ENCODE measurements at regions of chr10 and their contacts with region 1.

Region 1: GRCh38 chr10:28668363-28669226 is 8.7 kb upstream of the BAMBI start:
- DNase-seq: peak in 1 of 2 donors; percentile 88
- H3K4me3 ChIP-seq: no peak overlapping the region
- CTCF ChIP-seq: no peak
- POLR2A ChIP-seq: no peak

Region 2: DNA sequence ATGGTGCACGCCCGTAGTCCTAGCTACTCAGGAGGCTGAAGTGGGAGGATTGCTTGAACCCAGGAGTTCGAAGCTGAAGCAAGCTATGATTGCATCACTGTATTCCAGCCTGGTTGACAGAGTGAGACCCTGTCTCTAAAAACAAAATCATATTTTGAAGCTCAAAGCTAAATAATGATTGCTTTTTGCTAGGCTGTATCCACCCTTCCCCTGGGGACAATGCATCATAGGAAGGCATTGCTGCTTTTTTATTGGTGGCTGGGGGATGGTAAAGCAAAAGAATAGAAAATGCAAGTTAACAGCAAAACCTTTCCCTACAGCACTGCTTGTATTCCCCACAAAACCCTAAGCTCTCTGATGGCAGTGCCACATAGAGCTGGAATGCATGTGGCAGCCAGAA is 243.2 kb before region 1 on chr10:
- intact Hi-C with region 1: no loop called
- DNase-seq: no peak
- H3K4me3 ChIP-seq: no peak overlapping the region
- CTCF ChIP-seq: no peak
- POLR2A ChIP-seq: no peak

Region 3: DNA sequence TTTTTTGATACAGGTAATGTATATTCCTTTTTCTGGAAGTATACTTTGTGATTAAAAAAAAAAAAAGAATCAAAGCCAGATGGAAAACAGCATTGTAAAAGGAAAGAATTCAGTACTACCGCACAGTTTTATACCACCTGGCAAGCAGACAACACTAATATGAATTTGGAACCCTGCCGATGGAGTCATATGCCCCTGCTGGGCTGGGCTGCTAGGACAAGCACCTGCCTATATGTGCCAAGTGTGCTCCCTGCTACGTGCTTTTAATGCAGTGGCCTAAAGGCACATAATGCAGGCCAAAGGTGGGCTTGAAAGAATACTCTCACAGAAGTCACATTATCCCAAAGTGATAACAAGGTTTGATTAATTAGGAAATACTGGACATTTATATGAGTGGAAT is 165.5 kb before region 1 on chr10:
- intact Hi-C with region 1: no loop called
- DNase-seq: no peak
- H3K4me3 ChIP-seq: no peak overlapping the region
- CTCF ChIP-seq: no peak
- POLR2A ChIP-seq: no peak

Region 4: DNA sequence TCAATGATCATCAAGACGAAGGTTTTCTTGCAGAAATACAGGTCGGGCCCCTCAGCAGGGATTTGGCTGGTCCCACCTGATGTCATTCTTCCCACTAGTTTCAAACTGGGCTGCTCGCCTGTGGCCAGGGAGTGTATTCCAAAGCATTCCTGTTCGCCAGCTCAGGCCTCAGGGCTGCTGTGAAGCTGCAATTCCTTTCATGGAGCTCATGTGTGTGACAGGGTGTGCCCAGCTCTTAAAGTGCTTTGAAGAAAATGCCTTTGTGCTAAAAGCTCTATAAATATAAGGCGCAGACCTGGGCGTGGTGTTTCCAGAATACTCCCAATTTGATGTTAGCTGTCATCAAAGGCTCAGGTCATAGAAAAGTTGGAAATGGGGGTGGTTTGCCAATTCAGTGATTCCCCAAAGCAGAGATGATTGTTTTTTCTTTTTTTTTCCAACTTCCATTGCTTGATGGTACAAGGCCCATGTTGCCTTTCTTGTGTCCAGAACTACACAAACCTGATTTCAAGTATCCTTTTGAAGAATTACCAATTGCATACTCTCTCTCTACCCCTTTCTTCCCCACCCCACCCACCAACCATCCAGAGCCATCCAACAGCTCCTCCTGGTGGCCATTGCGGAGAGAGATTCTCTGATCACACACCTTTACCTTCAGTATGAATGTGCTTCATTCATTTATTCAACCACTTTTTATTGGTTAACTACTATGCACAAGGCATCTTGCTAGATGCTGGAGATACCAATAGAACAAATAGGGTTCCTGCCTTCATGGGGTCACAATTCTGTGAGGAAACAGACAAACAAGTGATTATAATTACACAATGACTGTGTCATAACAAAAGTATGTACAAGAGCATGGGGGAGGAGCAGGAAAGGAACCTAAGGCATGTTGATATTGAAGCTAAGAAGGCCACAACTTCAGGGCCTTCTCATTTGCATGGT is 323.0 kb after region 1 on chr10:
- intact Hi-C with region 1: loop called (anchors 5 kb)
- DNase-seq: peak in 1 of 2 donors; percentile 18
- H3K4me3 ChIP-seq: no peak overlapping the region
- CTCF ChIP-seq: no peak
- POLR2A ChIP-seq: no peak

Region 5: GRCh38 chr10:29189256-29189655 is 520.7 kb after region 1 on chr10:
- intact Hi-C with region 1: no loop called
- DNase-seq: peak in 1 of 2 donors; percentile 13
- H3K4me3 ChIP-seq: no peak overlapping the region
- CTCF ChIP-seq: no peak
- POLR2A ChIP-seq: no peak

Region 6: DNA sequence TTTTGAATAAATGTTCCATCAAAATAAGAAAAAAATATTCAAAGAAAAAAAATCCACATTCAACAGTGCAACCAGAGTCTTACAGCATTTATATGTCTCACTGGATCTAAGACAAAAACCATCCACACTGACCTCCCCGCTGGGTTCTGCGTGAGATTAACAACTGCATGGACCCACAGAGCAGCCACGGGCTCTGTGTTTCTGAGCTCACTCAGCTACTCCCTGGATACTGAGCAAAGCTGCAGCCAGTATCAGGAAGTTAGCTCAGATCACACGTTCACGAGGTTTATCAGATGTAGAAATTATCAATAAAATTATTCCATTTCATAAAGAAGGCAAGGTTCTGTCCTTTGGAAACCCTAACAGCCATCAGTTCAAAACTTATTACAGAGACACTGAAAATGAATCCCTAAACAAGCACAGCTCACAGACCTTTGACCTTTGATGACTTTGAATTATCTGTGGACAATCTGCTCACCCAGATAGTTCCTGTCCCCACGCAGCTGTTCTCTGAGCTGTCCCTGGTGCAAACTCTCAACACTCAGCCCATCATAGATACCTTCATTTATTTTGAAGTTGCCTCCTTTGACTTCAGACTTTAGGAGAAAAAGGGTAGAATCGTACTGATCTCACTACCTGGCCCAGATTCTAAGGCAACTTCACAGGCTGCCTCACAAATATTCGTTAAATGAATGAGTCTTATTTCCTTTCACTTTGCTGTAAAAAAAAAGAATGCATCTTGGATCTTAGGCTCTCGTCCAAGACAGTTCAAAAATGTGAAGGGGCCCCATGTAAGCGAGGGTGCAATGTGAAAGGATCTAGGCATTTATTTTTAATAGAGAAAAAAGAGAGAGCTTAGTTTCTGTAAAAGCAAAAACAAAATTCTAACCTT is 1033.9 kb after region 1 on chr10:
- intact Hi-C with region 1: no loop called
- DNase-seq: no peak
- H3K4me3 ChIP-seq: no peak overlapping the region
- CTCF ChIP-seq: no peak
- POLR2A ChIP-seq: no peak

Measured in lower leg skin (tissue), 4 donors.